Gastrocnemius medialis (tissue), 4 donors: ENCODE measurements at regions of chr1 and their contacts with region 1.

Region 1: DNA sequence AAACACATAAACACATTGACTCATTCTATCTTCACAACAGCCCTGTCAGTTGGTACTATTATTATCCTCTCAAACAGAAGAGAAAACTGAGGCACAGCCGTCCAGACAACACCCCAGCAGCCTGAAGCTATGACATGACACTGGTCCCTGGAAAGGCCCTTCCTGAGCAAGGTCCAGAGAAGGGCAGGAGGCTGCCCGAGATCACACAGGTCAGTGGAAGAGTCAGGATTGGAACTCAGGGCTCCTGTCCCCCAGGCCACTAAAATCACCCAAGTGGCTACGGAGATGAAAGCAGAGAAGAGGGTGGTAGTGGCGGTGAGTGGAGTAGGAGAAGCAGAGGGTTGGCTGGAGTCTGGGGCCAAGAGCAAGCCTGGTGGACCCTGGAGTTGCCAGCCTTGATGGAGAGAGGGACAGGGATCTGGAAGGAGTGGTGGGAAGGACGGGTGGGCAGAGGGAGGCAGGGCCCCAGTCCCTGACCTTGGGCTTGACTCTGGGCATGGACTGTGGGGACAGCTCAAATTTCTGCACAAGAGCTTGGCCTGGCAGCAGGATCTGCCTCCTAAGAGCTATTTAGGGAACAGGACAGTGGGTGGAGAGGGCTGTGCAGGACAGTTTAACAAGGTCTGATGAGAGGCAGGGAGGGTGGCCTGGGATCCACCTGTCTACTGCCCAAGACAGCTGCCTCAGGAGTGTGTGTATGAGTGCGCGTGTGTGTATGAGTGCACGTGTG is 15.8 kb downstream of the MYOM3 start:
- DNase-seq: peak; percentile 94 to 97
- ATAC-seq: peak; percentile 90 to 91
- H3K4me3 ChIP-seq: no peak overlapping the region
- H3K27ac ChIP-seq: peak overlapping the region; percentile 93 to 97 (median 96)
- H3K4me1 ChIP-seq: peaks cover 32 to 34% of the 10 kb centered on the region in 2 donors
- H3K27me3 ChIP-seq: no peaks in the 10 kb centered on the region
- CTCF ChIP-seq: peak in 1 of 5 experiments; percentile 30
- POLR2A ChIP-seq: peak; percentile 11 to 12

Region 2: GRCh38 chr1:24077278-24077978 is 18.7 kb before region 1 on chr1:
- in situ Hi-C with region 1: no loop called
- intact Hi-C with region 1: loop called (anchors 2 kb)
- DNase-seq: peak; percentile 75 to 88
- ATAC-seq: peak; percentile 89
- H3K4me3 ChIP-seq: no peak overlapping the region
- H3K27ac ChIP-seq: peak overlapping the region; percentile 83 to 88 (median 85)
- H3K4me1 ChIP-seq: peaks cover 24 to 48% of the 10 kb centered on the region in 2 donors
- H3K27me3 ChIP-seq: no peaks in the 10 kb centered on the region
- CTCF ChIP-seq: no peak
- POLR2A ChIP-seq: peak in 1 of 2 donors; percentile 9